ENCODE measurements at regions of chr14 and their contacts with region 1.

Region 1: GRCh38 chr14:64387694-64388532 is at the start of gene MTHFD1:
- DNase-seq: peak; percentile 98
- ATAC-seq: peak; percentile 78
- H3K4me3 Mint-ChIP-seq: peak within 1 kb of the TSS; percentile 88
- H3K27ac Mint-ChIP-seq: peak within 1 kb of the TSS; percentile 100
- H3K4me1 Mint-ChIP-seq: peaks cover 40% of the 10 kb centered on the region
- H3K27me3 Mint-ChIP-seq: peaks cover 4% of the 10 kb centered on the region
- CTCF ChIP-seq: no peak
- total RNA-seq, gene MTHFD1: 224 to 229 TPM (median 226 TPM) in 3 replicates

Region 2: DNA sequence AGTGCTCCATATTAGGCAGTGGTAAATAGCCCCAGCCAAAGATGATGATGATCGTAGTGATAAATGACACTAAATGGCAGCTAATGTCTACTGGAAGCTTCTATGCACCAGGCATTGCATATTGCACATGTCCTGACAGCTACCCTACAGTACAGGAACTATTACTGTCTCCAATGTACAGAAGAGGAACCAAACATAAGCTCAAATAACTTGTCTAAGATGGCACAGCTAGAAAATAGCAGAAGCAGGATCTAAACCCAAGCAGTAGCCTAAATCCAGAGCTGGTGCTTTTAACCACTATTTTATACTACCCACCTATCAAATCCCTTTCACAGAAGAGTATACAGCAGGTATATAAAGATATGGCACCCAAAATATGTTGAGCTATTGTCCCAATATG is 122.7 kb before region 1 on chr14:
- CTCF ChIA-PET with region 1: no interaction called
- POLR2A ChIA-PET with region 1: no interaction called
- DNase-seq: no peak
- ATAC-seq: no peak
- H3K4me3 Mint-ChIP-seq: no peak overlapping the region
- H3K27ac Mint-ChIP-seq: no peak overlapping the region
- H3K4me1 Mint-ChIP-seq: no peaks in the 10 kb centered on the region
- H3K27me3 Mint-ChIP-seq: no peaks in the 10 kb centered on the region
- CTCF ChIP-seq: no peak

Region 3: GRCh38 chr14:64338616-64339316 is 49.1 kb before region 1 on chr14:
- CTCF ChIA-PET with region 1: interaction called, 18 read pairs
- POLR2A ChIA-PET with region 1: interaction called, 33 read pairs
- DNase-seq: peak; percentile 93
- ATAC-seq: peak; percentile 88
- H3K4me3 Mint-ChIP-seq: peak overlapping the region; percentile 91
- H3K27ac Mint-ChIP-seq: peak overlapping the region; percentile 99
- H3K4me1 Mint-ChIP-seq: peaks cover 29% of the 10 kb centered on the region
- H3K27me3 Mint-ChIP-seq: peaks cover 2% of the 10 kb centered on the region; the same call in 1 of the 2 replicates
- CTCF ChIP-seq: no peak

Region 4: DNA sequence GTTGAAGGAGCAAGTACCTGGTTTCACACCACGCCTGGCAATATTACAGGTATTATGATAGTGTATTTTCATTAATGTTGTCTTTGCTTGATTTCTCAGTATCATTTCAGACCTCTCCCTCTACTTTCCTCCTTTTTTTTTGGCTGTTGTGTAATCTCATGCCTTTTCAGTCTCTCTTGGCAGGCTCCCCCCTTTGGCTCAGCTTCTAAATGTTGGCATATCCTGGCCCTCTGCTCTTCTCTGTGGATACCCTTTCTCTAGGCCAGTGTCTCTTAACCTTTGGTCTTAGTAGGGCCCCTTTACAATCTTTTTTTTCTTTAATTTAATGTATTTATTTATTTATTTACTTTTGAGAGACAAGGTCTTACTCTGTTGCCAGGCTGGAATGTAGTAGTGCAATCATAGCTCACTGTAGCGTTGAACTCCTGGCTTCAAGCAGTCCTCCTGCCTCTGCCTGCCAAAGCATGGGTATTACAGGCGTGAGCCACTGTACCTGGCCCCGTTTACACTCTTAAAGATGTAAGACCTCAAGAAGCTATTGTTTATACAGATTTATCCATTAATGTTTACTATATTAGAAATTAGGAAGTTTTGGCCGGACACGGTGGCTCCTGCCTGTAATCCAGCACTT is 13.0 kb after region 1 on chr14:
- CTCF ChIA-PET with region 1: interaction called, 3 read pairs
- POLR2A ChIA-PET with region 1: interaction called, 10 read pairs
- DNase-seq: no peak
- ATAC-seq: no peak
- H3K4me3 Mint-ChIP-seq: no peak overlapping the region
- H3K27ac Mint-ChIP-seq: peak overlapping the region; percentile 80
- H3K4me1 Mint-ChIP-seq: peaks cover 9% of the 10 kb centered on the region
- H3K27me3 Mint-ChIP-seq: no peaks in the 10 kb centered on the region
- CTCF ChIP-seq: no peak

Region 5: DNA sequence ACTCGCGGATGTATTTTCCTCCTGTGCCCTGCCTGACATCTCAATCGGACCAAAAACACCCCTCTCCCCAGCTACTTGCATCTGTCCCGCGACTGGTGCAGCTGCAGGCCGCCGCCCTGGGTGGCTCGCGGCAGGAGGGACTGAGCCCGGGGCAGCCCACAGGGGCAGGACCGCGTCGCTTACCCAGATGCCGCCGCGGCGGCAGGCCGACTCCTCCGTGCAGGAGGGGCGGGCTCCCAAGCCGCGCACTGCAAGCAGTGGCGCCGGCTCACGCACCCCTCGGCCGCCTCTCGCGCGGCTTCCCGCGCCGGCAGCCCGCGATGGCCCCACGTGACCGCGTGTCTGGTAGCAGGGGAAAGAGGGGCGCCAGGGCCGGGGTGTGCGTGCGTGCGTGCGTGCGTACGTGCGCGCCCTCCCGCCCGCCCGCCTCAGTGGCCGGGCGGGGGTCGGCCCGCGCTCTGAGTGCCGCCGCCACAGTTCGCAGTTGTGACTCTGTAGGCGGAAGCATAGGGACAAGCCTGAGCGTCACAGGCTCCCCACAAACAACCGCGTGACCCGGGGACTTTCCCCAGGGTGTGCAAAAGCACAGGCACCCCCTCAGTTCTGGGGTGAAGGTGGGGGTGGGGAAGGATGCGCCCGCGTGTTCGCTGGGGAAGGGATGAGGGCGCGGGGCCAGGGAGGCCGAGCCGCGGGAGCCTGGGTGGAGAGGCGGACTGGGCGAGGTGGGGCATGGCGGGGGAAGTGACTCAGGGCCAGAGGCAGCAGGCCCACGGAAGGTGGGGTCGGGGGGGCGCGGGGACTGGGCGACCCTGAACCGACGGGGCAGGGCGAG is 115.8 kb after region 1 on chr14 and contains the start of gene ZBTB25:
- CTCF ChIA-PET with region 1: no interaction called
- POLR2A ChIA-PET with region 1: interaction called, 10 read pairs
- DNase-seq: peak; percentile 87
- ATAC-seq: peak; percentile 70
- H3K4me3 Mint-ChIP-seq: peak within 1 kb of the TSS; percentile 81
- H3K27ac Mint-ChIP-seq: peak within 1 kb of the TSS; percentile 99
- H3K4me1 Mint-ChIP-seq: peaks cover 50% of the 10 kb centered on the region
- H3K27me3 Mint-ChIP-seq: no peaks in the 10 kb centered on the region
- CTCF ChIP-seq: no peak
- total RNA-seq, gene ZBTB25: 11.9 to 14.0 TPM (median 13.1 TPM) in 3 replicates

Measured in WTC11 (cell line).